ENCODE measurements at regions of chr9 and their contacts with region 1.

Region 1: DNA sequence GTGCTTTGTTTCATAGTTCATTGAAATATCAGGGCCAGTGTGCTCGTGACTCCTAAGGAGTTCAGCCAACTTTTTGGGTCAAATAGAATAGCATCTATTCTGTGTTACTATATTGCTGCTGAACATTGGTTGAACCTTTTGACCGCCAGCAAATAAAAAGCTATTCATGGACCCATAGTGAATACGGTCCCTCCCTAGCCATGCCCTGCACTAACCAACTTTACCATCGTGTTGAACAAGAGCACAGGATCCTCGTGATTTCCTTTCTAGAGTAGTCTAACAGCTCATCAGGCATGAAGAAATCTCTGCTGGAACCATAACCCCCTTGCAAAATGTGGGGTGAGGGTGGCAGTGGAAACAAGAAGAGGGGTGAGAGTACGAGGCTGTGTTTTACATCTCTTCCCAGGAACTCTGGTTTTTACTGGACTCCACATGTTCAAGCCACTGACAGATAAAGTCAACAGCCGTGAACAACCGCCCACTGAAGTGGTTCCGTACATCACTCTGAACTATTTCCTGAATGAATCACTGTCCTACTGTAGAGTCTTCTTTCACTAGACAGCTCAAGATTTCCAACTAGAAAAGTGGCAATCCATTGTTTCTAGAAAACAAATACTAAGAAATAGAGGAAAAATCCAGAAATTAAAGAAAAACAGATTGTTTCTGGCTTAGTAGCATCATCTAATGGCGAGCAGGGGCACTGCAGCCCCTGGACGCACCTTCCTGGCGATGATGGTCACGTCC is 70.1 kb upstream of the SPATA31E1 start:
- DNase-seq: peak; percentile 77
- H3K4me3 Mint-ChIP-seq: no peak overlapping the region
- H3K27ac Mint-ChIP-seq: peak overlapping the region; percentile 40
- H3K4me1 Mint-ChIP-seq: peaks cover 24% of the 10 kb centered on the region
- H3K27me3 Mint-ChIP-seq: peaks cover 26% of the 10 kb centered on the region

Region 2: DNA sequence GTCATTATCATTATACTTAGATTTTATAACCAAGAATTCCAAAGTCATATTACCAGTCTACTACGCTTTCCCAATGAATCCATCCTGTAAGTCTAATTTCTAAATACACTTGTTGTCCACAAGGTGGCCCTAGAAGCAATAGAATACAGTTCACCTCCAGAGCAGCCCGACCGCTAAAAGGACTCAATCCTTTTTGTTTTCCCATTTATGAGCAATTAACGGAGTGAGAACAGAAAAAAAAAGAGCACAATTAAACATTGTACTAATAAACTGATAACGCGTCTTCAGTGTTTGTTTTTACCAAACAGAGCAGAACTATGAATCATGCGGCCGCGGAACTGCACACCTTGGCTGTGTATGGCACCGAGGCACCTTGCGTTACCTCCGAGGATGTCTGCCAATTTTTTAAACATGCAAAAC is 475.6 kb before region 1 on chr9:
- CTCF ChIA-PET with region 1: interaction called, 4 read pairs
- POLR2A ChIA-PET with region 1: no interaction called
- intact Hi-C with region 1: loop called (anchors 2 kb)
- DNase-seq: peak; percentile 29
- H3K4me3 Mint-ChIP-seq: peak overlapping the region; percentile 64
- H3K27ac Mint-ChIP-seq: no peak overlapping the region
- H3K4me1 Mint-ChIP-seq: peaks cover 13% of the 10 kb centered on the region
- H3K27me3 Mint-ChIP-seq: peaks cover 39% of the 10 kb centered on the region

Region 3: DNA sequence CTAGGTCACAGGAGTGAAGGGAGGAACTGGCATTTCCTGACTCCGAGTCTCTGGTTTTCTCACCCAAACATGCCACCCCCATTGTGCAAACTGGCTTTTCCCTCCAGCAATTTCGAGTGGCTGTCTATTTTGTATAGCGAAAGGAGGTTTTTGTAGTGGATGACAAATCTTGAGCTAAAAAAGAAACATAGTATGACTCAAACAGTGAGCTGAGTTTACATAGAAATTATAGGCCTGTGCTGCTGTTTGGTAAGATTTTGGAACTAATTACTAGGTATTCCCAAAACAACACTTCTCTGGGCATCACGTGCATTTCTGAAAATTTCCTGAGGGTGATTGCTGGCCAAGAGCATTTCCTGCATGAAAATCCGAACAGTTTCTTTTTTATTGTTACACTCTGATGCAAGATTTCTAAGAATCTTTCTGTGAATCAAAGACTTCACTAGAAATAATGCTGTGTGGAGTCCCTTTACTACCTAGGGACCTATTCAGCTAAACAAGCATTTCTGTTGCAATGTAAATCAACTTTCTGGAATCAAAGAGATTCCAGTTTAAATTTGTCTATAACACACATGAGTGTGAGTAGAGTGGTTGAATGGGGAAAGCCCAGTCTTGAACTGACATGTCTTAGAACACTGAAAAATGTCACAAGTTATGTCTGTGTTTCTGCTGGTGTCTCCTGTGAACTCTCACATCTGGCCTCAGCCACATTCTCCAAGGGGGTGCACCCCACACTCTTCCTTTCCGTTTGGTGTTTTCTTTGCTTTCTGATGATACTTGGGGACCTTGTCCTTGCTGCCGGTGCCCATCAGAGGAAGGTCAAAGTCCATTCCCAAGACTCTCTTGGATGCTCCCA is 348.2 kb before region 1 on chr9:
- CTCF ChIA-PET with region 1: no interaction called
- POLR2A ChIA-PET with region 1: no interaction called
- intact Hi-C with region 1: loop called (anchors 1 kb)
- DNase-seq: peak; percentile 64
- H3K4me3 Mint-ChIP-seq: no peak overlapping the region
- H3K27ac Mint-ChIP-seq: peak overlapping the region; percentile 75
- H3K4me1 Mint-ChIP-seq: peaks cover 16% of the 10 kb centered on the region
- H3K27me3 Mint-ChIP-seq: no peaks in the 10 kb centered on the region

Region 4: DNA sequence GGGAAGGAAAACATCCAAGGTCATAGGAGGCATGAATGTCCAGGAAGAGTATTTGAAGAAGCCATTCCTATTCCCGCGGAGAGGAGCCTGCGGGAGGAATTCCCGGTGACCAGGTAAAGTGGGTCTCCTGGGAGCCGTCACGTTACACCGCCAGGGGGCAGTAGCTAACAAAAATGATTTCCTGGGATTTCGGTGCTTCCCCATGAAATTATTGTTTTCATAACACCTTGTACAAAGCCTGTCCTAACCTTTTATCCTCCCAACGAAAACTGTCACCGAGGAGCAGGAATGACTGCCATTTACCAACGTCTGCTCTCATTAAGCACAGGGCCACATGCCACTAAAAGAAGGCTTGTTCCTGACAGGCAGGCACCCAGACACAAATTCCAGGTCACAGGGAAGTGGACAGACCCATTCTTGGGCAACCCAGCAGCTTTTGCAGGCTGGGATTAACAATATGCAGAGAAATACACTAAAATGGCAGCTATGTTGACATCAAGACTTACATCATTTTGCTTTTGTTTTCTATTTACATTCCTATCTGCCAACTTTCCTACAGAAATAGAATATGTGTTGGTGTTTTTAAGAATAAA is 127.8 kb before region 1 on chr9:
- CTCF ChIA-PET with region 1: interaction called, 15 read pairs
- POLR2A ChIA-PET with region 1: no interaction called
- intact Hi-C with region 1: loop called (anchors 2 kb)
- DNase-seq: peak; percentile 31
- H3K4me3 Mint-ChIP-seq: no peak overlapping the region
- H3K27ac Mint-ChIP-seq: no peak overlapping the region
- H3K4me1 Mint-ChIP-seq: peaks cover 19% of the 10 kb centered on the region
- H3K27me3 Mint-ChIP-seq: no peaks in the 10 kb centered on the region

Region 5: DNA sequence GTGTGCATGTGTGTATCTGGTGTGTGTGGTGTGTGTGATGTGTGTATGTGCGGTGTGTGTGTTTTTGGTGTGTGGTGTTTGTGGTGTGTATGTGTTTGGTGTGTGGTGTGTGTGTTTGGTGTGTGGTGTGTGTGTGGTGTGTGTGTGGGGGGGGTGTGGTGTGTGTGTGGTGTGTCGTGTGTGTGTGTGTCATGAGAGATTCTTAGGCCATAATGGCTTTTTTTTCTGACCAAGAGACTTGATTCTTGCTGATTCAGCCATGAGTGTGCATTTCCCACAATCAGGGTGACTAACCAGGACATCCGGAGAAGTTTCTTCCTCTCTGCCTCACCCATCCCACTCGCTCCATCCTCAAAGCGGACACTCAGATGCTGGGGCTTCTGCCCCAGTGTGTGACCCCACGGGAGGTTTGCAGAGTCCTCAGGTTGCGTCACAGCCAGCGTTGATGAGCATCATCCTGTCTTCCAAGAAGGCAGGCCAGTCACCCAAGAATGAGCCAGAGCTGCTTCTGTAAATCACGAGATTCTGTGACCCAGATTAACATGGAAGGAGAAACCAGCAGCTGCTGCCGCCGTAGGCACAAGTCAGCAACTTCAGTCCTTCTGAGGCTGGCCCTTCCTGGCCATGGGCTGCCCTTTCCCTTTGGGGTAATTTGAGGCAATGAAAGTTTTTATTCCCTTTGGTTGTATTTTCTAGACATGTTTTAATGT is 99.1 kb before region 1 on chr9:
- CTCF ChIA-PET with region 1: interaction called, 10 read pairs
- POLR2A ChIA-PET with region 1: no interaction called
- intact Hi-C with region 1: loop called (anchors 1 kb)
- DNase-seq: peak; percentile 83
- H3K4me3 Mint-ChIP-seq: peak overlapping the region; percentile 10
- H3K27ac Mint-ChIP-seq: peak overlapping the region; percentile 60
- H3K4me1 Mint-ChIP-seq: peaks cover 37% of the 10 kb centered on the region
- H3K27me3 Mint-ChIP-seq: peaks cover 5% of the 10 kb centered on the region

Region 6: DNA sequence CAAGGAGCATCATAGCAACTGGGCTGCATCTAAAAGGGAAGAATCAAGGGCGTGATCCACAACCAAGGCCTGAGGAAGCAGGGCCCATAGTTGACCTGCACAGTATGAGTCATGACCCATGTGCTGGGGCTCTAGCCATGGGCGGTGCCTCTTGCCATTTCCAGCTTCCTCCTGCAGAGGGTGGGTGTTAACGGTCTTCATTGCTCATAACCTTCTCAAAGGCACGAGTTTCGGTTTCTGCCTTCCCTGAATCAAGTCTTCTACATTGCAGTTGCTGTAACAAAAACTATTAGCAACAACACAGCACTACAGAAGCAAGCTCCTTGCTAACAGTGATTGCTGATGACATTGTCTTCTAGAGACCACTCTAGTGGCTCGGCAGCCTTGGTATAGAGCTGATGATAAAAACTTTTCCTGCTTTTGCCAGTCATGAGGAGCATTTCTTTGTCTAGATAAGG is 19.7 kb before region 1 on chr9:
- CTCF ChIA-PET with region 1: interaction called, 8 read pairs
- POLR2A ChIA-PET with region 1: interaction called, 5 read pairs
- intact Hi-C with region 1: loop called (anchors 1 kb)
- DNase-seq: peak; percentile 83
- H3K4me3 Mint-ChIP-seq: peak overlapping the region; percentile 4
- H3K27ac Mint-ChIP-seq: peak overlapping the region; percentile 75
- H3K4me1 Mint-ChIP-seq: peaks cover 46% of the 10 kb centered on the region
- H3K27me3 Mint-ChIP-seq: no peaks in the 10 kb centered on the region

Measured in activated CD4-positive, alpha-beta memory T cell treated with anti-CD3 and anti-CD28 coated beads for 36 hours (primary cell).